ENCODE measurements at regions of chr15 and their contacts with region 1.

Region 1: GRCh38 chr15:34795267-34796081 is at the start of gene ACTC1:
- DNase-seq: peak; percentile 83 to 93
- ATAC-seq: peak; percentile 87
- H3K4me3 ChIP-seq: peak within 1 kb of the TSS; percentile 24 to 72
- H3K27ac ChIP-seq: peak within 1 kb of the TSS; percentile 73 to 83
- H3K4me1 ChIP-seq: peaks cover 0 to 11% of the 10 kb centered on the region in 2 donors
- H3K27me3 ChIP-seq: no peaks in the 10 kb centered on the region
- total RNA-seq, gene ACTC1: 107 to 2,067 TPM

Region 2: GRCh38 chr15:34708422-34708821 is 87.1 kb before region 1 on chr15:
- intact Hi-C with region 1: loop called in 1 of 2 experiments (anchors 5 kb)
- DNase-seq: no peak
- ATAC-seq: peak; percentile 57
- H3K4me3 ChIP-seq: no peak overlapping the region
- H3K27ac ChIP-seq: no peak overlapping the region
- H3K4me1 ChIP-seq: peaks cover 6% of the 10 kb centered on the region in 2 donors
- H3K27me3 ChIP-seq: no peaks in the 10 kb centered on the region

Region 3: GRCh38 chr15:34721802-34722795 is 73.4 kb before region 1 on chr15:
- intact Hi-C with region 1: loop called in 1 of 2 experiments (anchors 5 kb)
- DNase-seq: peak; percentile 84 to 92
- ATAC-seq: peak; percentile 93
- H3K4me3 ChIP-seq: no peak overlapping the region
- H3K27ac ChIP-seq: peak overlapping the region; percentile 10 to 63
- H3K4me1 ChIP-seq: peaks cover 2 to 15% of the 10 kb centered on the region in 2 donors
- H3K27me3 ChIP-seq: no peaks in the 10 kb centered on the region

Region 4: DNA sequence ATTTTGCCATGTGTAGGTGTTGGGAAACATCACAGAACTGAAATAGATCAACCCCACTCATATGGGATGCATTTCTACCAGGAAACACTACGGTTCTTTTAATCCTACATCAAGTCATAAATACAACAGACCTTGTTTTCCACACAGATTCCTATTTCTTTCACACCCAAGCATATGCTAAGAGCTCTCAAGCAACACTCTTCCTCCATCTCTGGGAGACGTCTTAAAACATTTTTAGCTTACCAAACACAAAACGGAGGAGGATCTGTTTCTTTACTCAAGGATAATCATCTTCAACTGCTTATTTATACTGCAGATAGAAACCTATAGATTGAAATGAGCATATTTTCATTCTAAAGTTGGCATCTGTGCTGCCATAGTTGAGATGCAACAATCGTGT is 45.8 kb before region 1 on chr15:
- intact Hi-C with region 1: no loop called
- DNase-seq: no peak
- ATAC-seq: no peak
- H3K4me3 ChIP-seq: no peak overlapping the region
- H3K27ac ChIP-seq: no peak overlapping the region
- H3K4me1 ChIP-seq: no peaks in the 10 kb centered on the region
- H3K27me3 ChIP-seq: no peaks in the 10 kb centered on the region

Region 5: GRCh38 chr15:34841262-34841725 is 45.8 kb after region 1 on chr15:
- intact Hi-C with region 1: loop called in 1 of 2 experiments (anchors 5 kb)
- DNase-seq: no peak
- ATAC-seq: peak; percentile 55
- H3K4me3 ChIP-seq: no peak overlapping the region
- H3K27ac ChIP-seq: no peak overlapping the region
- H3K4me1 ChIP-seq: peaks cover 1 to 4% of the 10 kb centered on the region in 2 donors
- H3K27me3 ChIP-seq: no peaks in the 10 kb centered on the region

Region 6: DNA sequence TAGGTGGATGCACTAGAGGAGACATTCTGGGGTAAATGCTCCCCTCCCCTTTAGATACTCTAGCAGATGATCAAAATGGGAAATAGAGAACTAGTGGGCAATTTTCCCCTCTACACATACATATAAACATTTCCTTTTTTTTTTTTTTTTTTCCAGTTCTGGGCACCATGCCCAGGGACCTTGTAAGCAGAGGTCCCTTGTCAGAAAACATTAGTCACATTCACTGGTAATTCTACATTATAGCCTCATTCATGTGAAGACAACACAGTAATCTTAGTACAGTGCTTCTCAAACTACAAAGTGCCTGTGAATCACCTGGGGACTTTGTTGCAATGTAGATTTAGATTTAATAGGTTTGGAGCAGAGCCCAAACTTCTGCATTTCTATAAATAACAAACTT is 59.9 kb after region 1 on chr15:
- intact Hi-C with region 1: loop called in 1 of 2 experiments (anchors 5 kb)
- DNase-seq: no peak
- ATAC-seq: peak; percentile 67
- H3K4me3 ChIP-seq: no peak overlapping the region
- H3K27ac ChIP-seq: no peak overlapping the region
- H3K4me1 ChIP-seq: peaks cover 4 to 10% of the 10 kb centered on the region in 2 donors
- H3K27me3 ChIP-seq: no peaks in the 10 kb centered on the region

Region 7: GRCh38 chr15:34900748-34901147 is 105.3 kb after region 1 on chr15:
- intact Hi-C with region 1: loop called in 1 of 2 experiments (anchors 5 kb)
- DNase-seq: no peak
- ATAC-seq: no peak
- H3K4me3 ChIP-seq: no peak overlapping the region
- H3K27ac ChIP-seq: no peak overlapping the region
- H3K4me1 ChIP-seq: peaks cover 0 to 2% of the 10 kb centered on the region in 2 donors
- H3K27me3 ChIP-seq: no peaks in the 10 kb centered on the region

Region 8: DNA sequence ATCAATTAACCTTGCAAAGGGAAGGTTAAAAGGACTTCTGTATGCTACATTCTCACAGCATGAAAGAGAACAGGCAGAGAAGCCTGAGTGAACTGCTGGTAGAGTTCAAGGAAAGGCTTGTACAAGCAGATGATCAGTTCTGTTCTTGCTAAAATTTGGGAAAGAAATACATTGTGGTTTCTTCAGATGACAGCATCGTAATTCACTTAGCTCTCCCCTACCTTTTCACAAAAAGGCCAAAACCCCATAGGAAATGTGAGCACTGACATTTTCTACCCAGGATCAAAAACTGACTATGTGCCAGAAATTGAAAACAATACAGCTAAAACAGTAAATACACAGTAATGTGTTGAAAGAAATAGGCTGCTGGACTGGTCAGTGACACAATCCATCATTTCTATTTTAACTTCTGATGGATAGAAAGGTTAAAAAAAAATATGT is 534.1 kb after region 1 on chr15:
- intact Hi-C with region 1: no loop called
- DNase-seq: no peak
- ATAC-seq: no peak
- H3K4me3 ChIP-seq: no peak overlapping the region
- H3K27ac ChIP-seq: no peak overlapping the region
- H3K4me1 ChIP-seq: peaks cover 0 to 2% of the 10 kb centered on the region in 2 donors
- H3K27me3 ChIP-seq: no peaks in the 10 kb centered on the region